ENCODE measurements at regions of chr20 and their contacts with region 1.

Region 1: GRCh38 chr20:37911838-37912281 is 8.9 kb downstream of the VSTM2L start:
- DNase-seq: peak; percentile 56
- H3K4me3 ChIP-seq: no peak overlapping the region
- H3K27ac ChIP-seq: no peak overlapping the region
- H3K4me1 ChIP-seq: peaks cover 15% of the 10 kb centered on the region
- H3K27me3 ChIP-seq: peaks cover 8% of the 10 kb centered on the region
- CTCF ChIP-seq: no peak

Region 2: GRCh38 chr20:37969949-37970855 is 58.3 kb after region 1 on chr20:
- CTCF ChIA-PET with region 1: no interaction called
- dilution Hi-C with region 1: no loop called
- in situ Hi-C with region 1: no loop called
- intact Hi-C with region 1: loop called (anchors 2 kb)
- DNase-seq: peak; percentile 17
- H3K4me3 ChIP-seq: no peak overlapping the region
- H3K27ac ChIP-seq: no peak overlapping the region
- H3K4me1 ChIP-seq: peaks cover 5% of the 10 kb centered on the region
- H3K27me3 ChIP-seq: no peaks in the 10 kb centered on the region
- CTCF ChIP-seq: no peak

Measured in mammary epithelial cell (primary cell).